CD4-positive, alpha-beta T cell (primary cell): ENCODE measurements at regions of chr19 and their contacts with region 1.

Region 1: GRCh38 chr19:14265290-14266036 is 59.5 kb upstream of the ADGRL1 start:
- DNase-seq: no peak
- ATAC-seq: no peak
- H3K4me3 ChIP-seq: no peak overlapping the region
- H3K4me3 Mint-ChIP-seq: no peak overlapping the region
- H3K27ac ChIP-seq: no peak overlapping the region
- H3K27ac Mint-ChIP-seq: no peak overlapping the region
- H3K4me1 ChIP-seq: no peaks in the 10 kb centered on the region
- H3K4me1 Mint-ChIP-seq: no peaks in the 10 kb centered on the region
- H3K27me3 ChIP-seq: peaks cover 0 to 4% of the 10 kb centered on the region in 2 experiments
- H3K27me3 Mint-ChIP-seq: no peaks in the 10 kb centered on the region
- CTCF ChIP-seq: no peak

Region 2: GRCh38 chr19:14167576-14168138 is 97.8 kb before region 1 on chr19:
- CTCF ChIA-PET with region 1: no interaction called
- POLR2A ChIA-PET with region 1: no interaction called
- intact Hi-C with region 1: no loop called
- DNase-seq: peak in 10 of 14 experiments; percentile 27 to 66 (median 44)
- ATAC-seq: peak; percentile 80
- H3K4me3 ChIP-seq: peak overlapping the region; percentile 54
- H3K4me3 Mint-ChIP-seq: peak overlapping the region; percentile 89
- H3K27ac ChIP-seq: peak overlapping the region; percentile 24 to 32
- H3K27ac Mint-ChIP-seq: peak overlapping the region; percentile 84
- H3K4me1 ChIP-seq: peaks cover 37% of the 10 kb centered on the region
- H3K4me1 Mint-ChIP-seq: peaks cover 27% of the 10 kb centered on the region
- H3K27me3 ChIP-seq: no peaks in the 10 kb centered on the region
- H3K27me3 Mint-ChIP-seq: no peaks in the 10 kb centered on the region
- CTCF ChIP-seq: no peak

Region 3: GRCh38 chr19:14203177-14203576 is 62.3 kb before region 1 on chr19:
- CTCF ChIA-PET with region 1: no interaction called
- POLR2A ChIA-PET with region 1: no interaction called
- intact Hi-C with region 1: no loop called
- DNase-seq: peak in 3 of 14 experiments; percentile 15 to 50 (median 27)
- ATAC-seq: no peak
- H3K4me3 ChIP-seq: no peak overlapping the region
- H3K4me3 Mint-ChIP-seq: peak overlapping the region; percentile 92
- H3K27ac ChIP-seq: no peak overlapping the region
- H3K27ac Mint-ChIP-seq: peak overlapping the region; percentile 72
- H3K4me1 ChIP-seq: peaks cover 34% of the 10 kb centered on the region
- H3K4me1 Mint-ChIP-seq: peaks cover 46% of the 10 kb centered on the region
- H3K27me3 ChIP-seq: no peaks in the 10 kb centered on the region
- H3K27me3 Mint-ChIP-seq: peaks cover 5% of the 10 kb centered on the region
- CTCF ChIP-seq: no peak

Region 4: DNA sequence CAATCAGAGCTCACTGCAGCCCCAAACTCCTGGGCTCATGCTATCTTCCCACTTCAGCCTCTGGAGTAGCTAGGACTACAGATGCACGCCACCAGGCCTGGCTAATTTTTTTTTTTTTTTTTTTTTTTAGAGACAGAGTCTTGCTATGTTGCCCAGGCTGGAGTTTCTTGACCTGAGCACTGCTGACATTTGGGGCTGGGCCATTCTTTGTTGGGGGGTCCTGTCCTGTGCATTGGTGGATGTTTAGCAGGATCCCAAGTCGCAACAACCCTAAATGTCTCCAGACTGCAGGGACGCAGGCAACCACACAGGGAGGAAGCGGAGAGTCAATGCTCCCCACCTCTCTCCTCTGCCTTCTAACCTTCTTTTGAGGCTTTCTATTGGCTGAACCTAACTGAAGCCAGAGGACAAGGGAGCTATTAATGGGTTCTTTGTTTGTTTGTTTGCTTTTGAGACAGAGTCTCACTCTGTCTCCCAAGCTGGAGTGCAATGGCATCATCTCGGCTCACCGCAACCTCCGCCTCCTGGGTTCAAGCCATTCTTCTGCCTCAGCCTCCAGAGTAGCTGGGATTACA is 57.5 kb after region 1 on chr19:
- CTCF ChIA-PET with region 1: no interaction called
- POLR2A ChIA-PET with region 1: no interaction called
- intact Hi-C with region 1: loop called in 1 of 2 experiments (anchors 5 kb)
- DNase-seq: no peak
- ATAC-seq: no peak
- H3K4me3 ChIP-seq: no peak overlapping the region
- H3K4me3 Mint-ChIP-seq: no peak overlapping the region
- H3K27ac ChIP-seq: no peak overlapping the region
- H3K27ac Mint-ChIP-seq: no peak overlapping the region
- H3K4me1 ChIP-seq: no peaks in the 10 kb centered on the region
- H3K4me1 Mint-ChIP-seq: no peaks in the 10 kb centered on the region
- H3K27me3 ChIP-seq: no peaks in the 10 kb centered on the region
- H3K27me3 Mint-ChIP-seq: no peaks in the 10 kb centered on the region
- CTCF ChIP-seq: no peak